Aorta (tissue), 5 donors: ENCODE measurements at regions of chr12 and their contacts with region 1.

Region 1: GRCh38 chr12:69639400-69640016 is 28.8 kb upstream of the LRRC10 start:
- DNase-seq: peak; percentile 73 to 85
- ATAC-seq: peak; percentile 68
- H3K4me3 ChIP-seq: no peak overlapping the region
- H3K27ac ChIP-seq: no peak overlapping the region
- H3K4me1 ChIP-seq: no peaks in the 10 kb centered on the region
- H3K27me3 ChIP-seq: no peaks in the 10 kb centered on the region

Region 2: DNA sequence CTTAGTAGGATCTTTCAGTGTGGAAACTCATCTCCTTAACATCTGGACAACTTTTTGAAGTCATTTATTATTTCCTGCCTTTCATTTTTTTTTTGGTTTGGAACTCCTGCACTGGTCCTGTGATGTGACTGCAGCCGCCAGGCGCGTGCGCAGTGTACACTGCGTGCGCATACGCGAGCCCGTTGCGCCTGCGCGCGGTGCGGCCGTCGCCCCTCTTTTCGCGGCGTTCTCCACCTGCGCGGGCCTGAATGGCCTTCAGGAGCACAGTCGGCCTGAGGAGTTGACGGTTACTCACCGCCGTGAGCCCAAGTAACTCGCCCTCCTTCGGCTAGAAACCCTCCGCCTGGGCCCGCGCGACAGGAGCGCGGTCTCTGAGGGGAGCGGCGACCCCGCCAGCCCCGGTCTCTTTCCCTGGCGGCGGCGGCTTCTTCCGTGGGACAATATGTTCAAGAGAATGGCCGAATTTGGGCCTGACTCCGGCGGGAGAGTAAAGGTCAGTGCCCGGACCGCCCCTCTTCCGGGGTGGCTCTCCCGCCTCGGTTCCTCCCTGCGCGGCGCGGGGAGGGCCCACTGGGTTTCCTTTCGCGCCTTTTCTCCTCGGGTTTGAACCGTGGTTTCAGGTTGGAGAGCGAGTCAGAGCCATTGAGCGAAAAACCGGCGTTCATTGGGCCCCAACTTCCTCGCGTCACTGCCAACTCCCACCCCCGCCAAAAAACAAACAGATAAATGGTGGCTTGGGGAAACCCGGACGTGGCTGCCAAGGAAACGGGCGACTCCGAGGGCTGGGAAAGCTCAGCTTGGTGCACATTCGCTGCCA is 279.8 kb before region 1 on chr12 and contains the start of gene YEATS4:
- intact Hi-C with region 1: loop called (anchors 2 to 5 kb)
- DNase-seq: peak; percentile 91 to 93
- ATAC-seq: peak; percentile 98
- H3K4me3 ChIP-seq: peak within 1 kb of the TSS; percentile 37 to 73
- H3K27ac ChIP-seq: peak within 1 kb of the TSS; percentile 37 to 89
- H3K4me1 ChIP-seq: no peaks in the 10 kb centered on the region
- H3K27me3 ChIP-seq: no peaks in the 10 kb centered on the region
- total RNA-seq, gene YEATS4: 8.5 to 11.6 TPM

Region 3: DNA sequence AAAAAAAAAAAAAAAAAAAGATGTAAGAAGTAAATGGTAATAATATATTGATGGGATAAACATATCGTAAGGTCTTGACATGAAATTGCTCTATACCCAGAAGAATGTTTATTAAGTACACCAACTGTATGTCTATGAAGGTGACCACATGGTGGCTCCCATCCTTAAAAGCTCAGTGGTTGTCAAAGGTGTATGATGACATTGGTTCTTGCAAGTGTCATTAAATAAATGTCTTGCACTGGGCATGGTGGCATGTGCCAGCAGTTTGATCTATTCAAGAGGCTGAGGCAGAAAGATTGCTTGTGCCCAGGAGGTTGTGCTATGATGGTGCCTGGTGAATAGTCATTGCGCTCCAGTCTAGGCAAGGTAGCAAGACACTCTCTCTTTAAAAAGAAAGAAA is 43.8 kb before region 1 on chr12:
- intact Hi-C with region 1: no loop called
- DNase-seq: no peak
- ATAC-seq: no peak
- H3K4me3 ChIP-seq: no peak overlapping the region
- H3K27ac ChIP-seq: no peak overlapping the region
- H3K4me1 ChIP-seq: no peaks in the 10 kb centered on the region
- H3K27me3 ChIP-seq: no peaks in the 10 kb centered on the region